ENCODE measurements at regions of chr18 and their contacts with region 1.

Region 1: DNA sequence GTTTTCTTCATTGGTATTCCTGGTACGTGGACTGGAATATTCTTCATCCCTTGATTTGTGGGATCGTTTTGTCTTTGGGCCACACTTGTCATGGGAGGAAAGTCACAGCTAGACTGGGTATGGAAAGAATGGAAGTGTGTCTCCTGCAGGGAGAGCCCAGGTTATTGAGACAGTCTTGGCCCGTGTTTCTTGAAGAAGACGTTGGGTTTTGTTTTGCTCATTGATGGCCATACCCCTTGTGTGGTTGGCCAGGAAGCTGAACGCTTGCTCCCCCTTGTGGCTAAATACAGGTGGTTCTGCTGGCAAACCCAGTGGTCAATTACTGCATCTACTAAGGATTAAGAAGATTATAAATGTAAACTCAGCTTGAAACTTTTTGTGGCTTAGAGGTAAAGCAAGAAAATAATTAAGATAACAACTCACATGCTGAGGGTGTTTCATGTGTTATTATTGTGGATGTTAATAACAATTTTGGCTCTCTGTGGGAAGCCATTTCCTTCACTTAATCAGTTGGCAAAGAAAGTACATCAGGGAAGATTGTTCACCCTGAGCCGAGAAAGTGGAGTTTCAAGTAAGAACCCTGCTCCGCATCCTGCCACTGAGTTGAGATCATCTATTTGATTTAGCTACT is 91.8 kb downstream of the NEDD4L start:
- DNase-seq: peak; percentile 65
- H3K4me3 Mint-ChIP-seq: no peak overlapping the region
- H3K27ac Mint-ChIP-seq: no peak overlapping the region
- H3K4me1 Mint-ChIP-seq: peaks cover 11% of the 10 kb centered on the region
- H3K27me3 Mint-ChIP-seq: peaks cover 11% of the 10 kb centered on the region

Region 2: GRCh38 chr18:57881818-57882413 is 253.9 kb before region 1 on chr18:
- CTCF ChIA-PET with region 1: interaction called, 12 read pairs
- DNase-seq: peak; percentile 62
- H3K4me3 Mint-ChIP-seq: no peak overlapping the region
- H3K27ac Mint-ChIP-seq: no peak overlapping the region
- H3K4me1 Mint-ChIP-seq: no peaks in the 10 kb centered on the region
- H3K27me3 Mint-ChIP-seq: peaks cover 4% of the 10 kb centered on the region

Region 3: GRCh38 chr18:58043491-58044379 is 92.1 kb before region 1 on chr18 and contains the start of gene NEDD4L:
- CTCF ChIA-PET with region 1: interaction called, 10 read pairs
- DNase-seq: peak; percentile 81
- H3K4me3 Mint-ChIP-seq: peak within 1 kb of the TSS; percentile 81
- H3K27ac Mint-ChIP-seq: peak within 1 kb of the TSS; percentile 3
- H3K4me1 Mint-ChIP-seq: peaks cover 28% of the 10 kb centered on the region
- H3K27me3 Mint-ChIP-seq: peaks cover 56% of the 10 kb centered on the region

Measured in activated naive CD4-positive, alpha-beta T cell treated with anti-CD3 and anti-CD28 coated beads, Interleukin-2, amount 10 ng/mL, durations not matched to agents 7 days and 5 days (primary cell).